ENCODE measurements at regions of chr6 and their contacts with region 1.

Region 1: DNA sequence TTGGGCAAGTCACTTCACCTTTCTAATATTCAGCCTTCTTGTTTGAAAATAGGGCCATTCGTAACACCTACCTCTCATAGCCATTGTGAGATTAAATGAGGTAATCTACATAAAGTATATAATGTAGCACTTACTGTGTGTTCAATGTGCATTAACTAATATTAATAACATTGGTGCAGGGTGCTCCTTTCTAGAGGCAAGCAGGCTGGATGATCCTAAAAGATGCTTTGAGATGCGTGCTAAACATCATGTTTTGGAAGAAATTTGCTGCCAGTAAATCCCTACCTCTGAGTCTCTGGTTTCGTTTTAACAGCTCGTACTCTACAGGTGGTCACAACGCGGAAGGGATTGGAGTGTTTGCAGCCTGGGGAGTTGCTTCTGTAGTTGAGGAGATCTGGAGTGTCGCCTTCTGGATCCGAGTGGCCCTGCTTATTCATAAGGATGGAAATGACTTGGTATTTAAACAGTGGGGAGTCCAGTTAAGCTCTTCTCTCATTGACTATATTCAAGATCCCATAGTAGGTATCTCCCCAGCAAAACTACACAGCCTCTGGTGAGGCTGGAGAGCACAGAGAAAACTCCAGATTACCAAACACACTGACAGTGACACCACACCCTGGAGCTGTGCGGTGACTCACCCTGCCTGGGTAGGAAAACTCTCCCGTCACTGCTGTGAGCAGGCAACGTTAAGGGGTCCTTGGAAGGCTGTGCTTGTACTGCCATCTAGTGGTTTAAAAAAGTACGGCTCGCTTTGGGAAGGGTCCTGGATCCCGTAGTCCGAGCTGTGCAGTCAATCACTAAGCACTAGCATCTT is 107.9 kb downstream of the MAP3K7 start:
- DNase-seq: peak; percentile 76
- H3K4me3 Mint-ChIP-seq: peak overlapping the region; percentile 3
- H3K27ac Mint-ChIP-seq: peak overlapping the region; percentile 85
- H3K4me1 Mint-ChIP-seq: peaks cover 56% of the 10 kb centered on the region
- H3K27me3 Mint-ChIP-seq: peaks cover 2% of the 10 kb centered on the region

Region 2: DNA sequence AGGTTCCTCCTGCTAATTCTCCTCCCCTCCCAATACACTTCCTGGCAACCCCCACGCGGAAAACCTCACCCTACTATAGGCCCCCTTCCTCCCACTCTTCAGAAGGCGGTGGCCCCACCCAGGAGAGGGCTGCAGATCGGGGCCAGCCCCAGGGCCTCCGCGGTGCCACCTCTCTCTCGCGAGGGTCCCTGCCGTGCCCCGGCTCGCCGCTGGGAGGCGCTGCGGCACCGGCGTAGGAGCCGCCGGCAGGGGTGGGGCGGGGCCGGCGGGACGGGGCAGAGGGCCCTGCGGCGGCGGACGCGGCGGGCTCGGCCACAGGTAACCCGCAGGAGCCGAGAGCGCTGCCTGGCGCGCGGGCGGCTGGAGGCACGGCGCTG is 1046.1 kb before region 1 on chr6 and contains the start of gene ANKRD6:
- intact Hi-C with region 1: loop called (anchors 5 kb)
- DNase-seq: peak; percentile 80
- H3K4me3 Mint-ChIP-seq: peak within 1 kb of the TSS; percentile 87
- H3K27ac Mint-ChIP-seq: peak within 1 kb of the TSS; percentile 70
- H3K4me1 Mint-ChIP-seq: peaks cover 18% of the 10 kb centered on the region
- H3K27me3 Mint-ChIP-seq: peaks cover 32% of the 10 kb centered on the region
- total RNA-seq, gene ANKRD6: 1.3 and 2.3 TPM in 2 replicates

Region 3: DNA sequence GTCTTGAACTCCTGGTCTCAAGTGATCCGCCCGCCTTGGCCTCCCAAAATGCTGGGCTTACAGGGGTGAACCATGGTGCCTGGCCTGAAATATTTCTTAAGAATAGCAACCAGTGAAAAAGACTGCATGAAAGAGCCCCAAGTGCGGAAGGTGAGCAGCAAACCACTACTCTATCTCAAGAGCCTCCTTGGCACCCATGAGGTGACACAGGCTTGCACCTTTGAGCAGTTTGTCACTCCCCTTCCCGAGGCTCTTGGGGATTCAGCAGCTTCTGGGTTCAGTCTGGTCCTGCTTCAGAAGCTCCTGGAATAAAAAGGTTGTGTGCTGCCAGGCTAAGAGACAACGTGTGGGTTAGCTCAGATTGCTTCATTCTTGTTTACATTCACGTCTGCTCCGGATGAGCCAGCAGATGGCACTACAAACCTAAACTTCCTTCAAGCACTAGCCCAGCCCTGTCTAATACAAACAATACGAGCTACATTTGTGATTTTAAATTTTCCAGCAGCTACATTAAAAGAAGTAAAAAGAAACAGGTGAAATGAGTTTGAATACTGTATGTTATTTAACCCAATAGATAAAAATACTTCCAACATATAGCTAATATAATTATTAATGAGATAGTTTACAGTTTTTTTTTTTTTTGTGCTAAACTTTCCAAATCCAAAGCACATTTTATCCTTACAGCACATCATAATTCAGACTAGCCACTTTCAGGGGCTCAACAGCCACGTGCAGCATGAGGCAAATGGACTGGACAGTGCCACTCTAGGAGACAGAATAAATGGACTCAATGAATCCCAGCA is 538.6 kb before region 1 on chr6:
- intact Hi-C with region 1: loop called (anchors 1 kb)
- DNase-seq: peak; percentile 57
- H3K4me3 Mint-ChIP-seq: no peak overlapping the region
- H3K27ac Mint-ChIP-seq: no peak overlapping the region
- H3K4me1 Mint-ChIP-seq: peaks cover 25% of the 10 kb centered on the region
- H3K27me3 Mint-ChIP-seq: no peaks in the 10 kb centered on the region

Region 4: DNA sequence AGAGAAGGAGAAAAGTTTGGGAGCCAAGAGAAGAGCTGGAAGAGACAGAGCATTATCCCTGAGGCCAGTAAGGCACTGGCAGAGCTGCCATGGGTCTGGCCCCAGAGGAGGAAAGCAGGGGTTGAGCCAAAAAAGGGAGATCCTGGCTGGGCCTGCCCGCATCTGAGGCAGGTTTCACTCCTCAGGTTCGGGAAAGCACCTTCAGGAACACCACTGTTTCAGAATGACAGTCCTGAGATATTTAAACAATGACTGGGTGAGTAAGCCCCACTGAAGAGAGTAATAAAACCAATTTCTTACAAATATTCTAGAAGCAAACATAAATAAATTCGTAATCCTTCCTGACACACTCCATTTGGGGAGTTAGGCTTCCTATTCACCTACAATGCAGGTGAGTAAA is 334.6 kb before region 1 on chr6:
- intact Hi-C with region 1: loop called (anchors 1 kb)
- DNase-seq: no peak
- H3K4me3 Mint-ChIP-seq: peak overlapping the region; percentile 45
- H3K27ac Mint-ChIP-seq: peak overlapping the region; percentile 78
- H3K4me1 Mint-ChIP-seq: peaks cover 66% of the 10 kb centered on the region
- H3K27me3 Mint-ChIP-seq: peaks cover 15% of the 10 kb centered on the region

Region 5: GRCh38 chr6:90194371-90194841 is 284.6 kb before region 1 on chr6:
- intact Hi-C with region 1: loop called (anchors 5 kb)
- DNase-seq: no peak
- H3K4me3 Mint-ChIP-seq: peak overlapping the region; percentile 38
- H3K27ac Mint-ChIP-seq: peak overlapping the region; percentile 54
- H3K4me1 Mint-ChIP-seq: peaks cover 68% of the 10 kb centered on the region
- H3K27me3 Mint-ChIP-seq: peaks cover 2% of the 10 kb centered on the region

Region 6: GRCh38 chr6:90350689-90351554 is 128.1 kb before region 1 on chr6:
- intact Hi-C with region 1: loop called (anchors 1 kb)
- DNase-seq: peak; percentile 38
- H3K4me3 Mint-ChIP-seq: peak overlapping the region; percentile 39
- H3K27ac Mint-ChIP-seq: peak overlapping the region; percentile 78
- H3K4me1 Mint-ChIP-seq: peaks cover 46% of the 10 kb centered on the region
- H3K27me3 Mint-ChIP-seq: peaks cover 10% of the 10 kb centered on the region

Region 7: DNA sequence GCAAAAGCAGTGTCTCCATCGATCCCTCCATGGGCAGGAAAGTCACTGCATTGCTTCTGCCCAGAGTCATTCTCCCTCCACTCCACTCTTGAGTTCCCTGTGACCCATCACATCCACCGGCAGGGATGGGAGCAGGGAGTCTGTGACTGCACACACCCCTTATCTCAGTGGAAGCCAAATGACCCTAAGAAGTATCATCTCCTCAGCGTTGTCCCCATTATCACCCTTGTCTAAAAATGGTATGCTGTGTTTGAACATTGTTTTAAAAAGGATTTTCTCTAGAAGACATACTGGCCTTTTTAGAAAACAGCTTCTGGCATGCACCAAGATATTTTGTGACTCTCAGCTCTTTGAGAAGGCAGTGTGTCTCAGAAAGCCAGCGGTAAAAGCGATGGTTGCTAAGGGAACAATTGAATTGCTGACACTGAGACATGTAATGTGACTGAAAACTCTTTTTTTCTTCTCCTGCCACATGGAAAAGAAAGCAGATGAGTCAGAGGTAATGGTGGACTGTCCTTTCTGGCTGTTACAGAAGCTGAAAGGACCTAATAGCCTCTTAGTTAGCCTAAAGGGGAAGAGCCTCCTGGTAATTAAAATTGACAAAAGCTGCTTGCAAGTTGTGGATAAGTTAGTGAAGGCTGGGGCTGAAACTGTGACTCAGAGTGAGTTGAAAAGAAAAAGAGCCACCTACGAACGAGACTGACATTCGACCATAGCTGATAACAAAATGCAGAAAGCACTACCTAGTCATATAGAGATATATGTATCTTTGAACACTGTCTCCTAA is 12.6 kb before region 1 on chr6:
- intact Hi-C with region 1: loop called (anchors 1 kb)
- DNase-seq: no peak
- H3K4me3 Mint-ChIP-seq: peak overlapping the region; percentile 61
- H3K27ac Mint-ChIP-seq: peak overlapping the region; percentile 92
- H3K4me1 Mint-ChIP-seq: peaks cover 93% of the 10 kb centered on the region
- H3K27me3 Mint-ChIP-seq: no peaks in the 10 kb centered on the region

Measured in activated T-helper 1 cell treated with anti-CD3 and anti-CD28 coated beads, Interleukin-12 subunit alpha, Interleukin-12 subunit beta, Interleukin-2, Interleukin-4 antibody, amounts not matched to agents 30 ng/mL and 10 ng/mL and 1 ng/mL, durations not matched to agents 14 hours and 24 hours and 36 hours (primary cell).